ENCODE measurements at regions of chr3 and their contacts with region 1.

Region 1: GRCh38 chr3:71652781-71653413 is 69.4 kb upstream of the FOXP1 start:
- DNase-seq: peak; percentile 42
- H3K4me3 Mint-ChIP-seq: no peak overlapping the region
- H3K27ac Mint-ChIP-seq: no peak overlapping the region
- H3K4me1 Mint-ChIP-seq: peaks cover 4% of the 10 kb centered on the region
- H3K27me3 Mint-ChIP-seq: no peaks in the 10 kb centered on the region

Region 2: GRCh38 chr3:70064194-70064779 is 1588.6 kb before region 1 on chr3:
- CTCF ChIA-PET with region 1: no interaction called
- intact Hi-C with region 1: loop called (anchors 10 kb)
- DNase-seq: peak; percentile 26
- H3K4me3 Mint-ChIP-seq: no peak overlapping the region
- H3K27ac Mint-ChIP-seq: no peak overlapping the region
- H3K4me1 Mint-ChIP-seq: no peaks in the 10 kb centered on the region
- H3K27me3 Mint-ChIP-seq: peaks cover 15% of the 10 kb centered on the region

Region 3: GRCh38 chr3:70531063-70531657 is 1121.7 kb before region 1 on chr3:
- CTCF ChIA-PET with region 1: no interaction called
- intact Hi-C with region 1: loop called (anchors 1 kb)
- DNase-seq: no peak
- H3K4me3 Mint-ChIP-seq: no peak overlapping the region
- H3K27ac Mint-ChIP-seq: no peak overlapping the region
- H3K4me1 Mint-ChIP-seq: no peaks in the 10 kb centered on the region
- H3K27me3 Mint-ChIP-seq: peaks cover 1% of the 10 kb centered on the region

Region 4: GRCh38 chr3:70716832-70717231 is 936.1 kb before region 1 on chr3:
- CTCF ChIA-PET with region 1: no interaction called
- intact Hi-C with region 1: loop called (anchors 5 kb)
- DNase-seq: peak; percentile 24
- H3K4me3 Mint-ChIP-seq: no peak overlapping the region
- H3K27ac Mint-ChIP-seq: no peak overlapping the region
- H3K4me1 Mint-ChIP-seq: peaks cover 2% of the 10 kb centered on the region
- H3K27me3 Mint-ChIP-seq: peaks cover 4% of the 10 kb centered on the region

Region 5: DNA sequence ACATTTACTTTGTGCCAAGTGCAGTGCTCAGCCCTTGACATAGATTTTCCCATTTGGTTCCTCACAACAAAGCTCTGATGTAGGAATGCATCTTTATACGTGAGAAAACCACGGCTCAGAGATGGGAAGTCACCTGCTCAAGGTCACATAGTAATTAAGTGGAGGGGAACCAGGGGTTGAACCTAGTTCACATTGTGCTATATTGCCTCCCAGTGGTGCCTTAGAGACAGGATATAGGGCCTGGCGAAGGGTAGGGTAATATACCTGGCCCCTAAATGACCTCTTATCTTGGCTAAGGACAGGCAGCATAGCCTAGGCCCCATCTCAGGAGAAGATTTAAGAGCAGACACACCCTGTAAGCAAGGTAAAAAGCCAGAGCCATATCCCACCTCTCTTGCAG is 140.9 kb before region 1 on chr3:
- CTCF ChIA-PET with region 1: no interaction called
- intact Hi-C with region 1: loop called (anchors 5 kb)
- DNase-seq: peak; percentile 59
- H3K4me3 Mint-ChIP-seq: no peak overlapping the region
- H3K27ac Mint-ChIP-seq: peak overlapping the region; percentile 6
- H3K4me1 Mint-ChIP-seq: peaks cover 12% of the 10 kb centered on the region
- H3K27me3 Mint-ChIP-seq: no peaks in the 10 kb centered on the region

Measured in activated naive CD4-positive, alpha-beta T cell treated with anti-CD3 and anti-CD28 coated beads for 36 hours (primary cell).